ENCODE measurements at regions of chr7 and their contacts with region 1.

Region 1: DNA sequence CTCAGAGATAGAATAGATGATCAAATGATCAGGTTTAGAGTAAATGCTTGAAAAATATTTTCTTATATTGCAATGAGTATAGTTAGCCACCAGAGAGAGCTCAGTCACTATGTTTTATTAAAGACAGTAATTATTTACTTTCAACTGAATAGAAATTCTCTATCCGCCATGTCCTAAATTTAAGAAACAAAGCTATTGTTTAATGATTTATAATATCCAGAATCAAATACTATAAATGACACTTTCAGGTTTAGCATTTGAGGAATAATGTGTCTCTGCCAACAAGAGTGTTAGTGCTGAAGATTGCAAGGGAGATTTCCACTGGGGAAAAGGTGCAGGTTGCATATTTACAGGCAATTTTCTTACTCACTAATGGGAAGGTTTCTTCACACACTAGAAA is 184.7 kb downstream of the DGKB start:
- DNase-seq: no peak

Region 2: GRCh38 chr7:16071246-16071857 is 1353.5 kb after region 1 on chr7:
- in situ Hi-C with region 1: loop called (anchors 25 kb)
- DNase-seq: peak; percentile 48